ENCODE measurements at regions of chr3 and their contacts with region 1.

Region 1: GRCh38 chr3:10738688-10739372 is 77.2 kb upstream of the SLC6A11 start:
- DNase-seq: peak; percentile 69 to 90 (median 80)
- H3K4me3 ChIP-seq: peak overlapping the region in 58 of 59 donors; percentile 18 to 69 (median 51)
- H3K27ac ChIP-seq: peak overlapping the region in 4 of 59 donors; percentile 35 to 58 (median 53)
- H3K27me3 ChIP-seq: peaks cover 0 to 14% (median 0%) of the 10 kb centered on the region in 45 donors
- CTCF ChIP-seq: peak; percentile 74 to 97 (median 88)

Region 2: DNA sequence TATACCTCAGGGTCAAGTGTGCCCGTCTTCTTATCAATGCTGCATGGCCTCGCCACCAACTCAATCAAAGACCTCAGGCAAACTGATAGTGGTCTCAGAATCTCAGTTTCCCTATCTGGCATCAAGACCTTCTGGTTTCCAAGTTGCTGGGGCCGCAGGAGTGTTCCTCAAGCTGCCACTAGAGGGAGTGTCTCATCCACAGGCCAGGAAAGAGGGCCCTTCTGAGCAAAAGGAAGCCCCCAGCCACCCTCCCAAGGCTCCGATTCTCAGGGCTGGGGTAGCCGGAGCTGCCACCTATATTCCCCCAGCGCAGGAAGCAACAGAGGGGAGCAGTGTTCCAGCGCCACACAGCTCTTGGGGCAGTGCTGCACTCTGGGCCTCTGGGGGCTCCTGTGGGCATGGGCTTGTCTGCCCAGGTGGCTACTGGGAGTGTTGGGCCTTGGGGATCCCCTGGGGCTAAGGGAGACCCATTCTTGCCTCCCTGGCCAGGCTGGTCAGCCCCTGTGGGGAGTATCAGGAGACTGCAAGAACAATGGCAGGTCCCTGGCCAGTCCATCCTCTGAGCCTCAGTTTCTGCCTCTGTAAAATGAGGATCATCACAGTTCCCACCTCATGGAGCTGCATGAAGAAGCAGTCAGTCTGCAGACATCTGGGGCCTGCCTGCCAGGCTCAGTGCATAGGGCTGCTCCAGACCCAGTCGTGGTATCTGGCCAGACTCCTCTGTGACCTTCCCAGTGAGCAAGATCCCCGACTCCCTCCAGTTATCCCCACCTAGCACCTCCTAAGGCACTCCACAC is 394.5 kb before region 1 on chr3:
- intact Hi-C with region 1: loop called (anchors 2 to 5 kb)
- DNase-seq: peak in 7 of 10 donors; percentile 34 to 68 (median 61)
- H3K4me3 ChIP-seq: no peak overlapping the region
- H3K27ac ChIP-seq: peak overlapping the region in 49 of 59 donors; percentile 4 to 78 (median 46)
- H3K27me3 ChIP-seq: no peaks in the 10 kb centered on the region
- CTCF ChIP-seq: peak; percentile 39 to 93 (median 83)

Region 3: DNA sequence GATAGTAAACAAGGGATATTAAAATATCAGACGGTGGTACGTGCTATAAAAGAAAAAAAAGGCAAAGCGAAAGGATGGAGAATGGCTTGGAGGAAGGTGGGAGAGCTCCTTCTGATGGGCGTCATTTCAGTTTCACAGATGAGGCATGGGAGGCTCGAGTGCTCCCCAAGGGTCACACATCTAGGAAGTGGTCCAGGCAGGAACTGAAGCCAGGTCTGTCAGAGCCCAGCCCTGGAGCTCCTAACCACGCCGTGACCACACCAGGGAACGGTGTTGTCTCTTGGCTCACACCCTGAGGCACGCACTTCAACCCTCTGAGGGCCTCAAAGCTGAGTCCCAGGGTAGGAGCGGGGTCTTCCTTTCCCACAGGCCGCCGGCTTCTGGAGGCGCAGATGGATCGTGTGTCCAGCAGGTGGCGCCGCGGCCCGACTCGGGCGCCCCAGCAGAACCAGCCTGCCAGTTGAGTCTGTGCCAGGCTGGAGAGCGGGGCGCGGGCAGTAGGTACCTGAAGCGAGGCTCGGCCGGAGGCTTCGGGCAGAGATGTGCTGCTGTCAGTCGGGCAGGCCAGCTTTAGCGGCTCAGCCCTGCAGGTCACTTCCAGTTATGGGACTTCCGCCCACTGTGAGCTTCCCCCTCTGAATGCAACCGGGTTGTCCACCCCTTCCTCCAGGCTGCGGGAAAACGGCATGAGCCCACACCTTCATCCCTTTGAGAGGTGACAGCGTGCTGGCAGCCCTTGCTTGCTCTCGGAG is 321.8 kb after region 1 on chr3:
- intact Hi-C with region 1: no loop called
- DNase-seq: peak; percentile 35 to 86 (median 70)
- H3K4me3 ChIP-seq: peak overlapping the region in 57 of 59 donors; percentile 9 to 67 (median 47)
- H3K27ac ChIP-seq: peak overlapping the region in 34 of 59 donors; percentile 3 to 75 (median 40)
- H3K27me3 ChIP-seq: peaks cover 0 to 13% (median 0%) of the 10 kb centered on the region in 45 donors
- CTCF ChIP-seq: peak; percentile 78 to 98 (median 95)